ENCODE measurements at regions of chr18 and their contacts with region 1.

Region 1: DNA sequence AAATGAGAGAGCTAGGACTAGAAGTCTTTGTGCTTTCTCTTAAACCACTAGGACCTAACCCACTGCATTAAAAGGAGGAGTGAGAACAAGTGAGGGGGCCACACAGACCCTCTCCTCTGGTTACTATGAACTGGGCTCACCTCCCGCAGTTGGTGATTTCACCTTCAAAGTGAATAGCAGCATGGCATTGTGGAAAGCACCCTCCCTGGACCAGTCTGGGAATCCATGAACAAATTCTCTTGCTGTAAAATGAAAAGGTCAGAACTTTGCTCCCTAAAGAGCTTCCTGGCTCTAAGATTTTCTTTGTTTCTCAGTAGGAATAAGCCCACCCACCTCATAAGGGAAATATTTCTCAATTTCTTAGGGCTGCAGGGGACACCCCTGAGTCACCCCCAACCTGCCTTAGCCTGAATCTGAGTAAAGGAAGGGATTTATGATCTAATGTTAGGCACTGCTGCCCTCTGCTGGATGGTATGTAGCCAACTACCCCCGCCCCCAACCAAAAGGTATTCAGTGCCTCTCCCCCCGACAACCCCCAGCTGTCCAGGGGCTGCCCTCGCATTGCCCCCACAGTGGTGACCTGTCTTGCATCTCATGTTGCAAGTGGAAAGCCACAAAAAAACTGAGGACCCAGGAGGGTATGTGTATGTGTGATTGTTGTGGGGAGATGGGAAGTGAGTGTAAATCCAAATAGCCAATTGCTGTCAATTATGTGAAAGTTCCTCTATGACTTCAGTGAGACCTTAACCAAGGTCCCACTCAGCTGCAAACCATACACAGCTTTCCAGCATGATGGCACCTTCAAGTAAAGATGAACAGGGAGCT is 230.9 kb upstream of the SLC14A2 start:
- DNase-seq: peak; percentile 79
- H3K4me3 Mint-ChIP-seq: no peak overlapping the region
- H3K27ac Mint-ChIP-seq: no peak overlapping the region
- H3K4me1 Mint-ChIP-seq: no peaks in the 10 kb centered on the region
- H3K27me3 Mint-ChIP-seq: peaks cover 15% of the 10 kb centered on the region

Region 2: DNA sequence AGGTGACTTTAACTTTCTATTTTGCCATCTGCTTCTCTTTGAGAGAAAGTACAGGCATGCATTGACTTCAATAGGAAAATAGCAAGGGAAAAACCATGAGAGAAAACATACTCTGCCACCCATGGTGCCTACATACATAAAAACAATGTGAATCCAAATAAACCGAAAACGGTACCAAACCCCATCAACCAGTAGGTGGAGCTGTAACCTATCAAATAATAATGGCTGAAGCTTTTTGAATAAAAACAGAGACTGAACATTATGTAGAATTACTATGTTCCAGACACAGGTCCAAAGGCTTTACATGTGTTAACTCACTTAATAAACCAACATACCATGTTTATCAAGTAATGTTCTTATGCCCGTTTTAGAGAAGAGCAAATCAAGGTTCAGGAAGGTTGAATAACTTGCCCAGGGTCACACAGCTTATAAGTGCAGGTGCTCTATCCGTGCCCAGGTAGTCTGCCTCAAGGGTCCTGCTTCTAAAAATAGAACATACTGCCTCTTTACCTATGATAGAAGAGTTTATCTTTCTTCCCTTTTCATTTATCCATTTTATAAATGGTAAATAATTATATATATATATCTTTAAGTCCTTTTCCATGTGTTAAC is 1813.2 kb before region 1 on chr18:
- intact Hi-C with region 1: loop called (anchors 5 kb)
- DNase-seq: peak; percentile 66
- H3K4me3 Mint-ChIP-seq: no peak overlapping the region
- H3K27ac Mint-ChIP-seq: no peak overlapping the region
- H3K4me1 Mint-ChIP-seq: no peaks in the 10 kb centered on the region
- H3K27me3 Mint-ChIP-seq: no peaks in the 10 kb centered on the region

Region 3: DNA sequence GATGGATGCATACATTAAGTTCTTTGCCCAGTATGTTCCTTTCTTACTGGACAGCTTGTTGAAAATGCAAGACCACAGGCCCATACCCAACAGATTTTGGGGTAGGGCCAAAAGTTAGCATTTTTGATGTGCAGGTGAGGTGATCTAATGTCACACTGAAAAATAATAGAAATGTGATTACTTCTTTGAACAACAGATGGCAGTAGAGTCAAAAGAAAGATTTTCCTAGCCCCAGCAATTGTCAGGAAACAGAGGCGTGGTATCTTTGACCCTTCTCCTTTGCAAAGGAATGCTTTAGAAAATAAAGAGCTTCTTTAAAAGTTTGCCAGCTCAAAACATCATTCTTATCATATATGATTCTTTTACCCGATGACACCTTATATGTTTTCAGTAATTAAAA is 1763.4 kb before region 1 on chr18:
- intact Hi-C with region 1: loop called (anchors 1 kb)
- DNase-seq: no peak
- H3K4me3 Mint-ChIP-seq: no peak overlapping the region
- H3K27ac Mint-ChIP-seq: no peak overlapping the region
- H3K4me1 Mint-ChIP-seq: no peaks in the 10 kb centered on the region
- H3K27me3 Mint-ChIP-seq: no peaks in the 10 kb centered on the region

Region 4: DNA sequence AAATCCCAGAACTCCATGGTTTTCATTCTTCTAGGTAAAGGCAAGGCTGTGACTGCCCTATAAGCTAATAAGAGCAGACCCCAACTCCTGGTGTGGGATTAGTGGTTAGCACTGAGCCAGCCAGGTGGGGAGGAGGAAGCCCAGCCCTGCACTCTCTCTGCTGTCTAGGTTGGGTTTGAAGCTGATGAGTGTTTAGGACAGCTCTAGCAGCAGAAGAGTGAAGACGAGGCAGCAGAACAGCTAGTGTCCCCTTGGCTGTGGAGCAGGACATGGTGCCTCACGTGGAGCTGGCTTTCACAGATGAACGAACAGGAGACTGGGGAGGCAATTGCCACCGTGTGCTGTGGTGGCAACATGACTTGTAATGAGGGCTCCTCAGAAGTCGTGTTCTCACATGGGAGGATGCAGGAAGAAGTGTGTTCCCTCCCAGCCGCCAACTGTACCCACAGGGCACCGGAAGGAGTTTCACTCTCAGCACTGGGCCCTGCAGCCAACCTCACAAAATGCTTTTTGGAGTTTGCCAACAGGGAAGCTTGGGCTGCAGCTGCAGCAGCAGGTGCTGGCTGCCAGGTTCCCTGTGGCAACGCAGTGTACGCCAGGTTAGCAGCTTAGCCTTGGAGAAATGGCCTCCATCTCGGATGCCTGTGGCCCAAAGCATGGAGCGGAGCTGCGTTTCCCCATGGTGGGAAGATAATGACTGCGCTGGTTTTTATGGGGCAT is 375.5 kb before region 1 on chr18:
- intact Hi-C with region 1: no loop called
- DNase-seq: no peak
- H3K4me3 Mint-ChIP-seq: no peak overlapping the region
- H3K27ac Mint-ChIP-seq: no peak overlapping the region
- H3K4me1 Mint-ChIP-seq: peaks cover 8% of the 10 kb centered on the region
- H3K27me3 Mint-ChIP-seq: no peaks in the 10 kb centered on the region

Region 5: DNA sequence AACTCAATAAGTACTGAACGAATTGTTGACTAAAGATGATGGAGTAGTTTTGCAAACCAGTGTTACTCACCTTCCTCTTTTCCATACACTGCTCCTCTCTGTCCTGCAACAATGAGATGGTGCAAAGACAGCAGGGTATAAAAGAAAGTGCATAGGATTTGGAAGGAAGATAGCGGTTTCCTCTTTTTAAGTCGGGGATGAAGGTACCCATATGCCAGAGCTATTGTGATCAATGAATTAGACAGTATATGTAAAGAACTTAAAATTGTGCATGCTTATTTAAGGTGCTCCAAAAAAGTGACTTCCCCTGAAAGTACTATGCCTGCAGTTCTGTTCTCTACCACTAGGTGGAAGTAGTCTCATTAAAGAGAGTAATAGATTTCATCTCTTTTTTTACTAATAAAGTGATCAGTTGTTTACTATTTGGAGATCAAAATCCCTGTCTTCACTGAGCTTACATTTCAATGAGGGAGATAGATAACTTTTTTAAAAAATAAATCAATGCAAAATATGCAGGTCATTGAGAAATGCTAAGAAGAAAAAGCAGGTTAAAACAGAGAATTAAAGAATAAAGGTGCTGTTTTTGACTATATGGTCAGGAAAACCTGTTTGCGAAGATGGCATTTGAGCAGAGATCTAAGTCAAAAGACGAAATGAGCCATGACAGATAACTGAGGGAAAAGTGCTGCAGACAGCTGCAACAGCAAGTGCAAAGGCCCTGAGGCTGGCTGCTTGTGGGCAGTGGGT is 108.8 kb before region 1 on chr18:
- intact Hi-C with region 1: loop called (anchors 2 kb)
- DNase-seq: peak; percentile 60
- H3K4me3 Mint-ChIP-seq: no peak overlapping the region
- H3K27ac Mint-ChIP-seq: no peak overlapping the region
- H3K4me1 Mint-ChIP-seq: no peaks in the 10 kb centered on the region
- H3K27me3 Mint-ChIP-seq: no peaks in the 10 kb centered on the region